ENCODE measurements at regions of chr1 and their contacts with region 1.

Region 1: GRCh38 chr1:224629965-224630364 is 13.8 kb downstream of the CNIH3 start:
- DNase-seq: no peak
- ATAC-seq: no peak
- H3K4me3 ChIP-seq: no peak overlapping the region
- H3K27ac ChIP-seq: no peak overlapping the region
- H3K4me1 ChIP-seq: no peaks in the 10 kb centered on the region
- H3K27me3 ChIP-seq: peaks cover 2 to 17% of the 10 kb centered on the region in 2 experiments; a peak in 3 of 5 replicates
- CTCF ChIP-seq: no peak
- EP300 ChIP-seq: no peak
- POLR2A ChIP-seq: no peak
- RAD21 ChIP-seq: no peak

Region 2: DNA sequence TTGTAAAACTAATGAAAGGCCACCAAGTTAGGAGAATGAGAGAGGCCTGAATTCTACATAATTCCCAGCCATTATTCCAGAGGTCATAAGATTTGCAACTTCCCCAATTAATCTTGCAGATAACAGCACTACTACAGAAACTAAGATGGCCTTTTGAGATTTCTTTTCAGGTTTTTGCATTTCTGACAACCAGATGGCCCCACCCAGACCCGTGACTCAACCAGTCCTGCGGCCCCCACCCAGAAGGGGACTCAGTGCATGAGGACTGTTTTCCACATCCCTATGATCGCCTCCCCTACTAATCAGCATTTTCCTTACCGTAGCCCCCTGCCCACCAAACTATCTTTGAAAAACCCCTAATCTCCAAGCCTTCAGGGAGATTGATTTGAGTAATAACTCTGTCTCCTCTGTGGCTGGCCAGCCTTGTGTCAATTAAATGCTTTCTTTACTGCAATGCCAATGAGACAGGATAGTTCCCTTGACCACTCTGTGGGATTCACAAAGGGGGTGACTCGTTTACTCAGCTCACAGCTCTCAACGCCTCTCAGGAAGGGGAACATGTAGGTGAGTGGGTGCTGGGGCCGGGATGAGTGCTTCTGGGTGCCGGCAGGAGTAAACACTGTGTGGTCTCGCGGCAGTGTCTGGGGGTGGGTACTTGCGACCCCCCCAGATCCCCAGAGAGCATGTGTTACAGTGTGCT is 24.3 kb before region 1 on chr1:
- CTCF ChIA-PET with region 1: no interaction called
- POLR2A ChIA-PET with region 1: no interaction called
- in situ Hi-C with region 1: no loop called
- intact Hi-C with region 1: loop called (anchors 1 kb)
- DNase-seq: no peak
- ATAC-seq: no peak
- H3K4me3 ChIP-seq: no peak overlapping the region
- H3K27ac ChIP-seq: no peak overlapping the region
- H3K4me1 ChIP-seq: no peaks in the 10 kb centered on the region
- H3K27me3 ChIP-seq: peaks cover 0 to 3% of the 10 kb centered on the region in 2 experiments; a peak in 1 of 5 replicates
- CTCF ChIP-seq: no peak
- EP300 ChIP-seq: no peak
- POLR2A ChIP-seq: no peak
- RAD21 ChIP-seq: no peak

Region 3: GRCh38 chr1:224615861-224616755 is 13.9 kb before region 1 on chr1 and contains the start of gene CNIH3:
- CTCF ChIA-PET with region 1: no interaction called
- POLR2A ChIA-PET with region 1: no interaction called
- in situ Hi-C with region 1: no loop called
- intact Hi-C with region 1: no loop called
- DNase-seq: no peak
- ATAC-seq: peak; percentile 76
- H3K4me3 ChIP-seq: no peak within 1 kb of the TSS
- H3K27ac ChIP-seq: no peak within 1 kb of the TSS
- H3K4me1 ChIP-seq: no peaks in the 10 kb centered on the region
- H3K27me3 ChIP-seq: peaks cover 1 to 37% of the 10 kb centered on the region in 2 experiments; a peak in 4 of 5 replicates
- CTCF ChIP-seq: no peak
- EP300 ChIP-seq: no peak
- POLR2A ChIP-seq: no peak
- RAD21 ChIP-seq: no peak
- total RNA-seq, gene CNIH3: 0.55 and 1.1 TPM in 2 replicates